Activated CD4-positive, alpha-beta T cell treated with anti-CD3 and anti-CD28 coated beads, Interleukin-2, amount 10 ng/mL, durations not matched to agents 24 days and 14 days (primary cell): ENCODE measurements at regions of chr2 and their contacts with region 1.

Region 1: GRCh38 chr2:9951272-9951972 is at the start of gene GRHL1:
- DNase-seq: peak; percentile 98
- H3K4me3 Mint-ChIP-seq: peak within 1 kb of the TSS; percentile 87
- H3K27ac Mint-ChIP-seq: peak within 1 kb of the TSS; percentile 80
- H3K4me1 Mint-ChIP-seq: peaks cover 13% of the 10 kb centered on the region
- H3K27me3 Mint-ChIP-seq: peaks cover 59% of the 10 kb centered on the region
- total RNA-seq, gene GRHL1: 1.2 and 2.1 TPM in 2 replicates

Region 2: DNA sequence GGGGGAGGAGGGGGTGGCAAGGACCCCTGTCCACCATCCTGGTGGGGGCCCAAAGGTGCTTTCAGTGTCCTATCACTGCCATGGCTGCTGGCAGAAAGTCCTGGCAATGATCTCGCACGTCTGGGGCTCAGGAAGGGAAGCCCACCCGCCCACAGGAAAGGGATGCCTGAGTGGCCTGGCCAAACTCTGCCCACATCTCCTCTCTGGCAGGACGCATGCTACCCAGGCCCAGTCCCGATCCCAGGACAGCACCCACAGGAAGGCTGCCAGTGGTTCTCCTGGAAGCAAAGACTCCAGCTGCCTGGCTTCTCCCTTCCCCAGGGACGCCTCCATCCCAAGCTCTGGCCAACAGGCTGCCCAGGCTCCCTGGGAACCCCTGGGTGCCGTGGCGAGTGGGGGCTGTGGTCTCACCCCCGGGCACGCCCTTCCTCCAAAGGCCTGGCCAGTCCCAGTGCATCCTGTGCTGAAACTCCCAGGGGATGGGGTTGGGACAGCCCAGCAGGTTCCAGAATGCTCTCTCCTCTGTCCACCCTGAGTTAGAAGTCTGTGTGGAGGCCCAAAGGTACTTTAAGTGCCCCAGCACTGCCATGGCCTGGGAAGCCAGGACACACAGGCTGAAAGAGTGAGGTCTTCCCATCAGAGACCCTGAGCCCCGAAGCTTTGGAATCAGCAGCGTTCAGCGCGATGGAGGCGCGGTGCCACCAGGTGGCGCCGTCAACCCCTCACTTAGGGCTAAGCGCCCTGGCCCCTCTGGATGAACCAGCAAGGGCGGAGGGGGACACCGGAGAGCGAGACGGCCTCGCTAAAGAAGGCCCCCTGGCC is 137.9 kb before region 1 on chr2:
- intact Hi-C with region 1: loop called (anchors 10 kb)
- DNase-seq: peak; percentile 93
- H3K4me3 Mint-ChIP-seq: no peak overlapping the region
- H3K27ac Mint-ChIP-seq: peak overlapping the region; percentile 68
- H3K4me1 Mint-ChIP-seq: peaks cover 11% of the 10 kb centered on the region
- H3K27me3 Mint-ChIP-seq: peaks cover 15% of the 10 kb centered on the region

Region 3: GRCh38 chr2:9975805-9976447 is 24.5 kb after region 1 on chr2:
- intact Hi-C with region 1: loop called (anchors 1 kb)
- DNase-seq: no peak
- H3K4me3 Mint-ChIP-seq: peak overlapping the region; percentile 6
- H3K27ac Mint-ChIP-seq: peak overlapping the region; percentile 59
- H3K4me1 Mint-ChIP-seq: peaks cover 52% of the 10 kb centered on the region
- H3K27me3 Mint-ChIP-seq: peaks cover 5% of the 10 kb centered on the region